Activated naive CD4-positive, alpha-beta T cell treated with anti-CD3 and anti-CD28 coated beads for 36 hours (primary cell): ENCODE measurements at regions of chr18 and their contacts with region 1.

Region 1: DNA sequence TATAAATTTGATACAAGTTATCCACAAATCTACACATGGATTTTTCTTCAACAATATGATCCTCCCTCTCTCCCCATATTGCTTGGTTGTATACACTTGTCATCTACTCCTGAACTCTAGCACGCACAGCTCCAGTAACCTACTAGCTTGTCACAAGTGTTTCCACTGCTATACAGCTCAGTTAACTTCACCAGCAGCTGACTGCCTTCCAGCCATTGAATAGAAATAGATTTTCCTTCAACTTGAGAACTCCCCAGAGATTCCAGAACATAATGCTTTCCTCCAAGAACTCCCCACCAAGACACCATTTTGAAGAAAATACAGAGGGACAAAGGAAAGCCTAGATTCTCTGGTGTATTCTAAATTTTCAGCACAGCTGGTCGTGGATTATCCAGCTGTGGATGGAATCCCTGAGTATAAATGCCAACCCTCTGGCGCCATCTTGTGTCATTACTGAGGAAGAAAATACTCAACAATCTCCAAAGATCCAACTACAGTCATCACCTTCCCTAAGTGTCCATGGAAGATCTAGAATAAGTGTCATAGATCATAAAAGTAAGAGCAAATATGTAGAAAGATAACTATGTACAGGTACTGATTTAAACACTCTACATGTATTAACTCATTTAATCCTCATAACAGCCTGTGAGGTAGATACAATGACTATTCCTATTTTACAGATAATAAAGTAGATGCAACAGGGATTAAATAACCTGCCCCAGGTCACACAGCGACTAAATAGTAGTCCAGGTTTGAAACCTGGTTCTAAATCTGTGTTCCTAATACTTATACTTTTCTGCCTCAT is 156.7 kb downstream of the ARHGAP28 start:
- DNase-seq: peak; percentile 33
- H3K4me3 Mint-ChIP-seq: no peak overlapping the region
- H3K27ac Mint-ChIP-seq: no peak overlapping the region
- H3K4me1 Mint-ChIP-seq: no peaks in the 10 kb centered on the region
- H3K27me3 Mint-ChIP-seq: no peaks in the 10 kb centered on the region

Region 2: GRCh38 chr18:6543330-6543908 is 342.8 kb before region 1 on chr18:
- CTCF ChIA-PET with region 1: interaction called, 9 read pairs
- intact Hi-C with region 1: loop called (anchors 1 kb)
- DNase-seq: no peak
- H3K4me3 Mint-ChIP-seq: no peak overlapping the region
- H3K27ac Mint-ChIP-seq: no peak overlapping the region
- H3K4me1 Mint-ChIP-seq: no peaks in the 10 kb centered on the region
- H3K27me3 Mint-ChIP-seq: no peaks in the 10 kb centered on the region

Region 3: GRCh38 chr18:7196421-7196820 is 310.2 kb after region 1 on chr18:
- CTCF ChIA-PET with region 1: no interaction called
- intact Hi-C with region 1: no loop called
- DNase-seq: no peak
- H3K4me3 Mint-ChIP-seq: no peak overlapping the region
- H3K27ac Mint-ChIP-seq: no peak overlapping the region
- H3K4me1 Mint-ChIP-seq: no peaks in the 10 kb centered on the region
- H3K27me3 Mint-ChIP-seq: no peaks in the 10 kb centered on the region